Right ventricle myocardium superior (tissue), 1 donor: ENCODE measurements at regions of chr12 and their contacts with region 1.

Region 1: DNA sequence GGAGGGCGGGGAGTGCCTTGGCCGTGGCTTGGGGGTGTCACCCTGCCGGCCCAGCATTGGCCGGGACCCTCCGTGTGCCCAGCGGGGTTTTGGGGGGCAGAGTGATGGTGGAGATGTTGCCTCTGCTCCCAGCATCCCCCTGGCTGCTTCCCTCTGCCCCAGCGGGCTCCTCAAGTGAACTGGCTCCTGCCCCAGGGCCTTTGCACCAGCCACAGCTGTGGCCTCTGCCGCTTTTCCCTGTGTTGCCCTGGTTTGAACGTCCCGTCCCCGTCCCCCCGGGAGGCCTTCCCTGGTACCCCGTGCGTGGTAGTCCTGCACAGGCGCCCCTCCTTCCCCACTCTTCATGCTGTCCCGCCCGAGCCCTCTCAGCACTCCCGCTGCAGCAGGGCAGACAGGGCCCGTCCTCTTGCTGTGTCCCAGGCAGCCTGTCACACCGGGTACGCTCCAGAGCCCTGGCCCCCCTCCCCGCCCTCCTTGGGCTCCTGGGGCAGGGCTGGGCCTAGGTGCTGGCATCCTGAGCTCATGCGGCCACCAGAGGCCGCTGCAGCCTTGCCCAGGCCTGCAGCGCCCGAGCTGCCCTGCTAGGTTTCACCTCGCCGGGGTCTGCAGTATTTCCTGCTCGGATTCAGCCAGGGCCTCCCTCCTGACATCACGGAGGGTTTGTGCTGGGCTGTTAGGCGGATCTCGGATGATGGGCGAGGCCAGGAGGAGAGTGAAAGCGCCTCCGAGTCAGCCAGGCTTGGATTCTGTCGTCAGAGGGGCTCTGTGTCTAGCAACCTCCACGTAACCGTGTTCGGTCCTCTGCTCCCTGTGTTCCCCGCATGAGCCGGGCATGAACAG is 9.5 kb downstream of the NOC4L start:
- DNase-seq: peak; percentile 82
- ATAC-seq: peak; percentile 95

Region 2: DNA sequence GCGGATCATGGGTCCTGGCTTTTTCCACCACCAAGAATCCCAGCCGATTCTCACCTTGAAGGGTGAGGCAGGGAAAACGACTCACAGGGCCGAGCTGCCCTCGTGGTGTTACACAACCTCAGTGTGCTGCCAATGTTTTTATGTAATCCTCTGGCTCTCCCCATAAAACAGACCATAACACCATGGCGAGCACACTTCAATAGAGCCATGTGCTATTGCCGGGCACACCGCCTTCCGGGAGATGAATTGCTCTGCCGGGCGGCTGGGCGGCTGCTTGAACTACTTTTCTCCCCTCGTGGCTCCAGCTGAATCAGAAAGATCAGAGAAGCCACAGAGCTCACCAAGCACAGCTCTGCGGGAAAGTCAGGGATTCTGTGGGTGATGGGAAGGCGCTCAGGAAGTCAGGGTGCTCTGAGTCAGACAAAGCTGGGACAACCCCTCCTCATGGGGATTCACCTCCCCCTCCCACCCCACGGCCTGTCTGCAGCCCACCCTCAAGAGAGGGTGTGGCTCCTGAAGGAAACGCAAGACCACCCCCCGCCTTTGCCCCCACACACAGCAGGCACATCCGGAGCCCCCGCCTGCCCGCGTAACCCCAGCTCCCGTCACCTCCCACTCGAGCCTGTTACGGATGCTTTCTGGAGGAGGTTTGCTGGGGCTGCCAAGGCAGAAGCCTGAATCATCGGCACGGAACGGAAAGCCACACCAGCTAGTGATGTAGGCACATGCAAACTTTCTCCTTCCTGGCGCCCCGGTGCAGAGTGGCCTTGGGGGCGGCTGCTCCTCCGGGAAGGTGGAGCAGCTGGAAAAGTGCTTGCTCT is 173.8 kb after region 1 on chr12:
- intact Hi-C with region 1: no loop called
- DNase-seq: peak; percentile 55
- ATAC-seq: peak; percentile 73

Region 3: DNA sequence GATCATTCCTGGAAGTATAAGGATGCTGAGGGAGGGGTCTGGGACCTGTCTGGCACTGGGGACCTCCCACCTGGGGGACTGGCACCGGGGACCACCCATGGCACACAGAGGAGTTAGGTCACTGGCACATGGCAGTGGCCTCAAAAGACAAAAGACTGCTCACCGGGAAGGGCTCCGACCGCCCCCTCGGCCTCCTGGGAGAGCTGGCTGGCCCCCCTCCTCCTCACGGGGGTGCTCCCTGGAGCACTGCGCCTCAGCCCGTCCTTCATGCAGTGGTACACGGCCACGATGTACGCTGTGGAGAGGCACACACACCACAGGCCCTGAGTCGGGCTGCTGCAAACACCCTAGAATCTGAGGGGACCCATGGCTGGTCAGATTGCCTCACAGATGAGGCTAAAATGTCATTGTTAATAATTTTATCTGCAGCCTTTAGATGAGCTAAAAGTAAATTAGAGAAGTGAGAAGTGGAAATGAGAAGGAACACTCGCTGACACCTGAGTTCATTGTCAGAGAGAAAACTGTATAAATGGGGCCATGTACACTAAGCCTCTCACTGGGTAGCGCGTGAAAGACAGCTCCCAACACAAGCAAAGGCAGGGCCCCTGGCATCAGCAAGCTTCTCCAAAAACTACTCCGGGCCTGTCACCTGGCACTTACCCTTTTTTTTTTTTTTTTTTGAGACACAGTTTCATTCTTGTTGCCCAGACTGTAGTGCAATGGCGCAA is 478.9 kb after region 1 on chr12:
- intact Hi-C with region 1: no loop called
- DNase-seq: no peak
- ATAC-seq: no peak

Region 4: GRCh38 chr12:132649206-132649934 is 495.6 kb after region 1 on chr12:
- intact Hi-C with region 1: loop called (anchors 10 kb)
- DNase-seq: no peak
- ATAC-seq: no peak